ENCODE measurements at regions of chr22 and their contacts with region 1.

Region 1: GRCh38 chr22:30485362-30485988 is 13.7 kb upstream of the SEC14L3 start:
- DNase-seq: no peak
- H3K4me3 ChIP-seq: no peak overlapping the region
- H3K27me3 ChIP-seq: peaks cover 3% of the 10 kb centered on the region; the same call in 1 of the 2 replicates
- CTCF ChIP-seq: peak; percentile 97

Region 2: DNA sequence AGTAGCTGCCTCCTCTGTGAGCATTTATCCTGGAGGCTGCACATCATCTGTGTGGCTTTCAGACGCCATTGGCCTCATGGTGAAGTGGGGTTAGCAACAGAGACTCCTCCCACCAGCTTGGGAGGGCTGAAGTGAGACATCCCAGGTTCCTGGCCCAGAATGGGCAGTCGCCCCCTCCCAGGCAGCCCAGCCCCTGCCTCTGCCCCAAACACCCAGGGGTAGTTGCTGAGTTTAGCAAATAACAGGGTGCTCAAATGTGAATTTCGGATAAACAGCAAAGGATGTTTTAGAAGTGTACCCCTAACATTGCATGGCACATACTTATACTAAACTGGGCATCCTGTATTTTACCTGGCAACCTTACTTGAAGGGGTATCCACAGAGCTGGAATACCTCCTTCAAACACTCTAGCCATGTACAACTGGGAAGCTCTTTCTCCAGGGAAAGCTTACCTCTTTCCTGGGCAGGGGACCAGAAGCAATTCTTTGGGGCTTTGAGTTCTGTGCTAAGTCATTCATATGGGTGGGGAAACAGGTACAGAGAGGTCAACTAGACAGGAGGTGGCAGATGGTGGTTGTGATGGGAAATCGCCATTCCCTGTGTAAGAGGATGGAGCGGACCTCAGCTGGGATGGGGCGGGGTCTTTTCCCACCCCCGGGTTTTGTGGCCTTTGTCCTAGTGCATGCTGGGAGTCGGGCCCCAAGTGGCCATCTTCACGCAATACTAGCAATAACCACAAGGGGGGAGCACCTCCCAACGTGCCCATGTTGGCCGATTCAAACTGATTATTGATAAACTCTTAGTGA is 40.6 kb before region 1 on chr22:
- CTCF ChIA-PET with region 1: interaction called, 18 read pairs
- POLR2A ChIA-PET with region 1: no interaction called
- DNase-seq: no peak
- H3K4me3 ChIP-seq: no peak overlapping the region
- H3K27me3 ChIP-seq: 0 out of 2 replicates have a peak, but pooled peaks cover 4% of the 10 kb centered on the region
- CTCF ChIP-seq: peak; percentile 73

Region 3: GRCh38 chr22:30474683-30475424 is 10.6 kb before region 1 on chr22:
- CTCF ChIA-PET with region 1: interaction called, 30 read pairs
- POLR2A ChIA-PET with region 1: no interaction called
- DNase-seq: no peak
- H3K4me3 ChIP-seq: no peak overlapping the region
- H3K27me3 ChIP-seq: peaks cover 14% of the 10 kb centered on the region
- CTCF ChIP-seq: no peak

Measured in BJ (cell line).